Activated T-helper 2 cell treated with anti-CD3 and anti-CD28 coated beads, Interferon-gamma antibody, Interleukin-2, Interleukin-4, amounts not matched to agents 10 μg/mL and 5 μg/mL and 100 μg/mL, durations not matched to agents 14 hours and 24 hours and 36 hours (primary cell): ENCODE measurements at regions of chr9 and their contacts with region 1.

Region 1: GRCh38 chr9:133103183-133103986 is 17.7 kb downstream of the RALGDS start:
- DNase-seq: no peak
- H3K4me3 Mint-ChIP-seq: no peak overlapping the region
- H3K27ac Mint-ChIP-seq: peak overlapping the region; percentile 72
- H3K4me1 Mint-ChIP-seq: no peaks in the 10 kb centered on the region
- H3K27me3 Mint-ChIP-seq: no peaks in the 10 kb centered on the region

Region 2: DNA sequence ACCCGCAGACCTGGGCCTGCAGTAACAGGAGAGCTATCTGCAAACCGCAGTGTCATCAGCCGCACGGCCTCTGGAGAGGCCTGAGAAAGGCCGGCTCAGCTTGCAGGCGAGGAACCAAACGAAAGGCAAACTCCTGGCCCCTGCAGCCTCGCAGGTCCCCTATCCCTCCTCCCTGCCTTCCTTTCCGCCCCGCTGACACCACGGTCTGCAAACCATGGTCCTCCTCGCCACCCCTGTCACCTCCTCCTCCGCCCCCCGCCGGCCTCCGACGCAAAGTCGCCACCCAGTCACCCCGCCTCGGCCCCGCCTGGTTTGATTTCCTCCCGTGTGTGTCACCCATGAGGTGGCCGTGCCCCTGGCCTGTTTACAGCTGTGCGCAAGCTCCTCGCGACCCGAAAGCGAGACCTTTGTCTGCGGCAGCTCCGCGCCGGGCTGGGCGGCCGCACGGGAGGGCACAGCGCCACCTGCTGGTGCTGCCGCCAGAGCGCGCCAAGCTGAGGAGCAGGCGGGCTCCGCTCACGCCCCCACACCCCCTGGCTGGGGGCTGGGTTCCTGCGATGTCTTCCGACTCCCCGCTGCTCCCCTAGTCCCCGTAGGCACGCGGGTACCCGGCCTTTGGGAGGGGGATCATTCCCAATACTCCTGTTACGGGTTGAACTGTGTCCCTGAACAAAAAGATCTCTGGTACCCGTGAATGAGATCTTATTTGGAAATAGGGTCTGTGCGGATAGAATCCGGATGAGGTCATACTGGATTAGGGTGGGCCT is 40.9 kb after region 1 on chr9:
- intact Hi-C with region 1: loop called (anchors 1 kb)
- DNase-seq: peak; percentile 94
- H3K4me3 Mint-ChIP-seq: peak overlapping the region; percentile 69
- H3K27ac Mint-ChIP-seq: peak overlapping the region; percentile 89
- H3K4me1 Mint-ChIP-seq: peaks cover 46% of the 10 kb centered on the region
- H3K27me3 Mint-ChIP-seq: no peaks in the 10 kb centered on the region

Region 3: GRCh38 chr9:133485361-133486260 is 382.2 kb after region 1 on chr9:
- intact Hi-C with region 1: no loop called
- DNase-seq: no peak
- H3K4me3 Mint-ChIP-seq: peak overlapping the region; percentile 21
- H3K27ac Mint-ChIP-seq: no peak overlapping the region
- H3K4me1 Mint-ChIP-seq: peaks cover 2% of the 10 kb centered on the region
- H3K27me3 Mint-ChIP-seq: peaks cover 5% of the 10 kb centered on the region